ENCODE measurements at regions of chr4 and their contacts with region 1.

Region 1: DNA sequence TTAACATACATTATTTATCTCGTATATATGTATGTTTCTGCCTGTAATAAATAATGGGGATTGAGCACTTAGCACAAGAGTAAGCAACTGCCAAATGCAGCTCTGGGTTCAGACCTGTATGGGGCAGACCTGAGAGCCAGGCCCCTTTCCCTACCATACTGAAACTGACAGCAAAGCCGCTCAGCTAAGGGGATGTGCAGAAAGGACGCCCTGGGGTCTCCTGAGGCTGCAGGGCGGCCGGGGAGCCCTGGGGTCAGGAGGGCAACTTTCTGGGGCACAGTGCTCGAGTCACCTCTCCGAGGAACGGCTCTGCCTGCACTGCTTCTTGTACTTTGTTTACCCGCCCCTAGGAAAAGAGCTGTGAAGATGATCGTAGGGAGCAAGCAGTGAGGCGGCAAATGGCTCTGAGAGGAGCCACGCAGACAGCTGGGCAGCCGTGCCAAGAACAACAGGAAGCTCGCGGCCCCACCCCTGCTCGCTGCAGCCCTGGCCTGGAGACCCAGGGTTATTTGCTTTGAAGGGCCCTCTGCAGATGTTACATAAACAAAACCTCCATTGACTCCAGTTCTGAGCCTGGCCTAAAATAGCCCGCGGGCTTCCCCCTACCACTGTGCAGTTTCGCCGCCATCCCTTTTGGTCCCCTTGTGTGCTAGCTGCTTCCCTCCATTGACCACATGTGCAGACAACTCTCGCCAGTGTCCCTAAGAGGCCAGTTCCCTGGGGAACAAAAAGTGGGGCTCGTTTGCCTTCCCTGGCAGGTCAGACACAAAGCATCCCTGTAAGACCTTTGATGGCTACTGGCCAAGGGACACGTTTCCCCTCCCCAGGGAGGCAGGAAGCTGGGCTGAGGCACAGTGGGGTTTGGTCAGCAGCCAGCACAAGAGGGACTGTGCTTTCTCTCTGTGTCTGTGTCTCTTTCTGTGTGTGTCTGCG is 111.3 kb upstream of the LNX1 start:
- DNase-seq: peak in 1 of 2 donors; percentile 80
- H3K4me3 ChIP-seq: peak overlapping the region; percentile 39 to 52
- H3K27ac ChIP-seq: peak overlapping the region; percentile 52 to 65
- H3K4me1 ChIP-seq: peaks cover 0 to 16% of the 10 kb centered on the region in 2 donors
- H3K27me3 ChIP-seq: no peaks in the 10 kb centered on the region
- CTCF ChIP-seq: no peak

Region 2: DNA sequence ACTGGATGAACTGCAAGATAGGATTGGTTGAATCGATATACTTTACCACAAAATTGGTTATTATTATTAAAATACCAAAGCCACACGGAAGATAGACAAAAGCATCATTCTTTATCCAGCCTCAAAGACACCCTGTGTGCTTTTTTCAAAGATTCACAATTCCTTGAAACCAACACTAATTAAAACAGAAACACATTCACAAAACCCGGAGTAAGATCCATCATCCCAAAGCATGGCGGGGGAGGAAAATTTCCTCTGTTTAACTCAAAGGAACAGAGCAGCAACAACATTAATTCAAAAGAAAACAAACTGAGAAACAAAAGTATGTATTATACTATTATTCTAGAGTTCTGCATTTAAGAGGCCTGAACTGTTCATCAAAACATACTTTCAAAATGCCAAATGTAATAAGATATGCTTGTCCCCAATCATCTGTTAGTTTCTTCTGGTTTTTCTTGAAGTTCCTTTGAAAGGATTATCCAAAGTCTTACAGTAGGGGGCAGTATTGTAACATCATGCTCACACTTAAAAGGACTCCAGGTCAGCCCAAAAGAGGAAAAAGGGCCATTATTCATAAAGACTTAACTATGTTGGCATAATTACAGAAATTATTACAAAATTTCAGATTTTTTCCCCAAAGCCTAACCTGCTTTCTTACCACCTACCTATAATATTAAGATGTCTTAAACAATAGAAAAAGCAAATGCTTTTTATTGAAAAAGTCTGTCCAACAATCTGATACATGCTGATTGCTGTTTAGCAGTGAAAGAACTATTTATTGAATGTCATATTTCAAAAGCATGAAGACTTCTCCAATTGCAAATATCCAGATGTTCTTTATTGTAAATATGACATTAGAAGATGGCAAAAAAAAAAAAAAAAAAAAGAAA is 505.5 kb before region 1 on chr4:
- intact Hi-C with region 1: loop called (anchors 10 kb)
- DNase-seq: no peak
- H3K4me3 ChIP-seq: peak overlapping the region in 1 of 2 donors; percentile 13
- H3K27ac ChIP-seq: no peak overlapping the region
- H3K4me1 ChIP-seq: no peaks in the 10 kb centered on the region
- H3K27me3 ChIP-seq: no peaks in the 10 kb centered on the region
- CTCF ChIP-seq: peak; percentile 66 to 77 (median 72)

Region 3: DNA sequence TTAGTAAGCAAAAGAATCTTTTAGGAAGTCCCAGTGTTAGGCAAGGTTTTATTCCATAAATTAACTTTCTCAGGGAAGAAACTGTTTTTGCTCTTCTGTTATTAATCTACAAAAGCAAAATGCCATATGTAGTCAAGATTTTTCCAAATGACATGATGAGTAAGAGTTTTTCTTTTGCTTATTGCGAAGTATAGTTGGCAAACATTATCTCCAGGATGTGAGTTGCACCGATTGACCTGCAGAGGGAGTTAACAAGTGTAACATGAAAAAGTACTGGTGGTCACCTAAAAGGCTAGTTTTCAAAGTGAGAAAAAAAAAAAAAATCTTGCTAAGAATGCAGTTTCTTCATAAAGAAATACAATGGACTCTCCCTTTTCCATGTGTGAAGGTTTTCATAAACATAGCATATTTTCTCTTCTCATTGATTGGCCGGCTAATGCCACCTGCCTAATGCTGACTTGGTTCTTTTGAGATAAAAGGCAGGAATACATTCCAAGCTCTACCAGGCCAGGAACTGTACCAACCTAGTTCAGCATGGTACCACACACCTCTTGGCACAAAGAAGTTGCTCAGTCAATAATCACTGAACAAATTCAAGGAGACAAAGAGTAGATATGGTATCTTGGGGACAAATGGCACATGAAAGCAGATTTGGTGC is 211.5 kb before region 1 on chr4:
- intact Hi-C with region 1: loop called (anchors 10 kb)
- DNase-seq: peak in 1 of 2 donors; percentile 84
- H3K4me3 ChIP-seq: no peak overlapping the region
- H3K27ac ChIP-seq: peak overlapping the region in 1 of 2 donors; percentile 7
- H3K4me1 ChIP-seq: no peaks in the 10 kb centered on the region
- H3K27me3 ChIP-seq: no peaks in the 10 kb centered on the region
- CTCF ChIP-seq: peak; percentile 51 to 65 (median 60)

Region 4: GRCh38 chr4:53962516-53963225 is 260.1 kb after region 1 on chr4:
- intact Hi-C with region 1: no loop called
- DNase-seq: no peak
- H3K4me3 ChIP-seq: no peak overlapping the region
- H3K27ac ChIP-seq: no peak overlapping the region
- H3K4me1 ChIP-seq: no peaks in the 10 kb centered on the region
- H3K27me3 ChIP-seq: no peaks in the 10 kb centered on the region
- CTCF ChIP-seq: no peak